ENCODE measurements at regions of chr10 and their contacts with region 1.

Region 1: GRCh38 chr10:110864662-110865140 is 7.0 kb upstream of the PDCD4 start:
- DNase-seq: peak in 11 of 14 experiments; percentile 26 to 95 (median 58)
- ATAC-seq: peak; percentile 67
- H3K4me3 ChIP-seq: peak overlapping the region; percentile 37
- H3K4me3 Mint-ChIP-seq: peak overlapping the region; percentile 86
- H3K27ac ChIP-seq: peak overlapping the region; percentile 88 to 99
- H3K27ac Mint-ChIP-seq: peak overlapping the region; percentile 96
- H3K4me1 ChIP-seq: peaks cover 97% of the 10 kb centered on the region
- H3K4me1 Mint-ChIP-seq: peaks cover 99% of the 10 kb centered on the region
- H3K27me3 ChIP-seq: no peaks in the 10 kb centered on the region
- H3K27me3 Mint-ChIP-seq: no peaks in the 10 kb centered on the region
- CTCF ChIP-seq: no peak

Region 2: DNA sequence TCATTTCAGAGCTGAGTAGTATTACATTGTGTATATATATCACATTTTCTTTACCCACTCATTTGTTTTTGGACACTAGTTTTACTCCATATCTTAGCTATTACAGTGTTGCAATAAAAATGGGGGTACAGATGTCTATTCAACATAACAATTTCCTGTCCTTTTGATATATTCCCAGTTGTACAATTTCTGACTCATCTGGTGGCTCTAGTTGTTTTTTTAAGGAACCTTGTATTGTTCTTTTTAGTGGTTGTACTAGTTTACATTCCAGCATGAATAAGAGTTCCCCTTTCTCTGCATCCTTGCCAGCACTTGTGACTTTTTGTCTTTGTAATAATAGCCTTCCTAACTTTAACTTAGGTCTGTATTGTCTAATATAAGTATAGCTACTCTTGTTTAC is 1681.3 kb before region 1 on chr10:
- CTCF ChIA-PET with region 1: no interaction called
- POLR2A ChIA-PET with region 1: no interaction called
- intact Hi-C with region 1: no loop called
- DNase-seq: no peak
- ATAC-seq: no peak
- H3K4me3 ChIP-seq: no peak overlapping the region
- H3K4me3 Mint-ChIP-seq: no peak overlapping the region
- H3K27ac ChIP-seq: no peak overlapping the region
- H3K27ac Mint-ChIP-seq: no peak overlapping the region
- H3K4me1 ChIP-seq: no peaks in the 10 kb centered on the region
- H3K4me1 Mint-ChIP-seq: no peaks in the 10 kb centered on the region
- H3K27me3 ChIP-seq: no peaks in the 10 kb centered on the region
- H3K27me3 Mint-ChIP-seq: no peaks in the 10 kb centered on the region
- CTCF ChIP-seq: no peak

Region 3: GRCh38 chr10:109838592-109839244 is 1026.0 kb before region 1 on chr10:
- CTCF ChIA-PET with region 1: no interaction called
- POLR2A ChIA-PET with region 1: no interaction called
- intact Hi-C with region 1: no loop called
- DNase-seq: no peak
- ATAC-seq: no peak
- H3K4me3 ChIP-seq: no peak overlapping the region
- H3K4me3 Mint-ChIP-seq: no peak overlapping the region
- H3K27ac ChIP-seq: no peak overlapping the region
- H3K27ac Mint-ChIP-seq: no peak overlapping the region
- H3K4me1 ChIP-seq: no peaks in the 10 kb centered on the region
- H3K4me1 Mint-ChIP-seq: no peaks in the 10 kb centered on the region
- H3K27me3 ChIP-seq: peaks cover 3 to 8% of the 10 kb centered on the region in 2 experiments
- H3K27me3 Mint-ChIP-seq: peaks cover 22% of the 10 kb centered on the region
- CTCF ChIP-seq: no peak

Region 4: DNA sequence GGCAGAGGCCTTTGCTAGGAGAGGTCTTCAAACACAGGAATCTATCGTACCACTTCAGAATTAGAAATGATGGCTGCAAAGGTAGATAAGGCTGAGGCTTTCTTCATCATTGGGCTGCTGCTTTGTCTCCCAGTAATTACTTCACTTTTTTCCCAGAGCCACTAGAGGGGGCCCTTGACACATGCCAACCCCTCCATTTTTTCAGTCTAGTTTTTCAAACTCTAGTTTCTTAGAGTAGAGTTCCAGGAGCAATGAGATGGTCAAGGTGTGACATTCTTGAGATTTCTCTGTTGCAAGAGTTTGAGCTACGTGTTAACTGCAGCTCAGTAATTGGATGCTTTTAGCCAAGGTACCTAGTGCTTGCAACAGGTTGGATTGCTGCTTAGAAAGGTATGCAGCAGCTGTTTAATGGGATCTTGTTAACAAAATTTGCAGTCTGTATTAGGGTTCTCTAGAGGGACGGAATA is 254.4 kb before region 1 on chr10:
- CTCF ChIA-PET with region 1: no interaction called
- POLR2A ChIA-PET with region 1: no interaction called
- intact Hi-C with region 1: no loop called
- DNase-seq: peak; percentile 13 to 79 (median 34)
- ATAC-seq: peak; percentile 72
- H3K4me3 ChIP-seq: no peak overlapping the region
- H3K4me3 Mint-ChIP-seq: no peak overlapping the region
- H3K27ac ChIP-seq: no peak overlapping the region
- H3K27ac Mint-ChIP-seq: no peak overlapping the region
- H3K4me1 ChIP-seq: no peaks in the 10 kb centered on the region
- H3K4me1 Mint-ChIP-seq: no peaks in the 10 kb centered on the region
- H3K27me3 ChIP-seq: no peaks in the 10 kb centered on the region
- H3K27me3 Mint-ChIP-seq: no peaks in the 10 kb centered on the region
- CTCF ChIP-seq: peak; percentile 93

Region 5: DNA sequence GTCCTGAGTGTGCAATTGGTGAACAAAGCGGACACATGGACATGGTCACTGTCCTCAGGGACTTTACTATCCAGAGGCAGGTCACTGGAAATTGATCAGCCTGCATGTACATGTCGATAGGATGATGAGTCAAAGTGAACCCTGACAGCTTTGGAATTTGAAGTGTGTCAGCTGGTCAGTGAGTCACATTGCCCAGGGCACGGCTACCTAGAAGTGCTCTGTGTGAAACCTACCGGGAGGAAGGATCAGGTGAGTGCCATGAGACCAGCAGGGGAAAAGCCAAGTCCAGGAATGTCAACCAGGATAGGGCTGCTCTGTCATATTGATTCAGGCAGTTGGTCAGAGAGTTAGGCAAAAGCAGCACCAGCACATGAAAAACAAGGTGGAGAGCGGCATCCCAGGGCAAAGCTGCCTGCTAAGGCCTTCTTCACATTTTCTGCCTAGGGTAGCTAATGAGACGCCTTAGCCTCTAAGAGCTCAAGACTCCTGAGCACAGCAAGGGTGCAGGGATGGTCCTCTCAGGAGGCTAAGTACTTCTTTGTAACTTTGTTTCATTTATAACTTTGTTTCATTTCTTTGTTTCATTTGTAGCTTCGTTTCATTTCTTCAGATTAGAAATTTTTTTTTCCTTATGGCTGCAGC is 12.3 kb before region 1 on chr10:
- CTCF ChIA-PET with region 1: interaction called, 4 read pairs
- POLR2A ChIA-PET with region 1: interaction called, 16 read pairs
- intact Hi-C with region 1: loop called in 1 of 2 experiments (anchors 2 kb)
- DNase-seq: peak in 1 of 14 experiments; percentile 28
- ATAC-seq: no peak
- H3K4me3 ChIP-seq: no peak overlapping the region
- H3K4me3 Mint-ChIP-seq: peak overlapping the region; percentile 66
- H3K27ac ChIP-seq: no peak overlapping the region
- H3K27ac Mint-ChIP-seq: peak overlapping the region; percentile 52
- H3K4me1 ChIP-seq: peaks cover 61% of the 10 kb centered on the region
- H3K4me1 Mint-ChIP-seq: peaks cover 75% of the 10 kb centered on the region
- H3K27me3 ChIP-seq: no peaks in the 10 kb centered on the region
- H3K27me3 Mint-ChIP-seq: no peaks in the 10 kb centered on the region
- CTCF ChIP-seq: no peak

Measured in CD4-positive, alpha-beta T cell (primary cell).